Activated CD4-positive, alpha-beta memory T cell treated with anti-CD3 and anti-CD28 coated beads for 36 hours (primary cell): ENCODE measurements at regions of chrX and their contacts with region 1.

Region 1: DNA sequence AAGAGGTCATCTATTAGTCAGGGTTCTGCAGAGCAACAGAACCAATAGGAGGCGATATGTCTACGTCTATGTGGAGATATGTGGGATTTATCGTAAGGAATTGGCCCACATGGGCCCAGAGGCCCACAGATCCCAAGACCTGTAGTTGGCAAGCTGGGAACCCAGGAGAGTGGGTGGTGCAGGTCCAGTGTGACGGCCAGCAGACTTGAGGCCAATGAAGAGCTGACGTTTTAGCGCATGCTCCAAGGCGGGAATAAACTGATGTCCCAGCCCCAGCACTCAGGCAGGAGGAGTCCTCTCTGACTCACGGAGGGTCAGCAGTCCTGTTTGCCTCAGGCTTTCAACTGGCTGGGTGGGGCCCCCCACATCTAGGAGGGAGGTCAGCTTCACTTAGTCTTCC is 21.3 kb downstream of the SPACA5 start:
- DNase-seq: no peak
- H3K4me3 Mint-ChIP-seq: no peak overlapping the region
- H3K27ac Mint-ChIP-seq: no peak overlapping the region
- H3K4me1 Mint-ChIP-seq: peaks cover 4% of the 10 kb centered on the region
- H3K27me3 Mint-ChIP-seq: no peaks in the 10 kb centered on the region

Region 2: GRCh38 chrX:47828984-47829383 is 199.1 kb before region 1 on chrX:
- CTCF ChIA-PET with region 1: interaction called, 13 read pairs
- POLR2A ChIA-PET with region 1: no interaction called
- intact Hi-C with region 1: loop called (anchors 1 kb)
- DNase-seq: no peak
- H3K4me3 Mint-ChIP-seq: no peak overlapping the region
- H3K27ac Mint-ChIP-seq: no peak overlapping the region
- H3K4me1 Mint-ChIP-seq: no peaks in the 10 kb centered on the region
- H3K27me3 Mint-ChIP-seq: no peaks in the 10 kb centered on the region

Region 3: DNA sequence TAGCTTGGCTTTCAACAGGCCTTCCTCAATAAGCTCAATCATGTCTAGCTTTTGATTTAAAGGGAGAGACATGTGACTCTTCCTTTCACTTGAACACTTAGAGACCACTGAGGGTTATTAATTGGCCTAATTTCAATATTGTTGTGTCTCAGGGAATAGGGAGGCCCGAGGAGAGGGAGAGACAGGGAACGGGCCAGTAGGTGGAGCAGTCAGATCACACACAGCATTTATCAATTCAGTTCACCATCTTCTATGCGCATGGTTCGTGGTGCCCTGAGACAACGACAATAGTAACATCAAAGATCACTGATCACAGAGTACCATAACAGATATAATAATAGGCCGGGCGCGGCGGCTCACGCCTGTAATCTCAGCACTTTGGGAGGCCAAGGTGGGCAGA is 173.6 kb before region 1 on chrX:
- CTCF ChIA-PET with region 1: interaction called, 12 read pairs
- POLR2A ChIA-PET with region 1: no interaction called
- intact Hi-C with region 1: loop called (anchors 5 kb)
- DNase-seq: peak; percentile 22
- H3K4me3 Mint-ChIP-seq: no peak overlapping the region
- H3K27ac Mint-ChIP-seq: no peak overlapping the region
- H3K4me1 Mint-ChIP-seq: no peaks in the 10 kb centered on the region
- H3K27me3 Mint-ChIP-seq: no peaks in the 10 kb centered on the region